MCF 10A (cell line): ENCODE measurements at regions of chr9 and their contacts with region 1.

Region 1: DNA sequence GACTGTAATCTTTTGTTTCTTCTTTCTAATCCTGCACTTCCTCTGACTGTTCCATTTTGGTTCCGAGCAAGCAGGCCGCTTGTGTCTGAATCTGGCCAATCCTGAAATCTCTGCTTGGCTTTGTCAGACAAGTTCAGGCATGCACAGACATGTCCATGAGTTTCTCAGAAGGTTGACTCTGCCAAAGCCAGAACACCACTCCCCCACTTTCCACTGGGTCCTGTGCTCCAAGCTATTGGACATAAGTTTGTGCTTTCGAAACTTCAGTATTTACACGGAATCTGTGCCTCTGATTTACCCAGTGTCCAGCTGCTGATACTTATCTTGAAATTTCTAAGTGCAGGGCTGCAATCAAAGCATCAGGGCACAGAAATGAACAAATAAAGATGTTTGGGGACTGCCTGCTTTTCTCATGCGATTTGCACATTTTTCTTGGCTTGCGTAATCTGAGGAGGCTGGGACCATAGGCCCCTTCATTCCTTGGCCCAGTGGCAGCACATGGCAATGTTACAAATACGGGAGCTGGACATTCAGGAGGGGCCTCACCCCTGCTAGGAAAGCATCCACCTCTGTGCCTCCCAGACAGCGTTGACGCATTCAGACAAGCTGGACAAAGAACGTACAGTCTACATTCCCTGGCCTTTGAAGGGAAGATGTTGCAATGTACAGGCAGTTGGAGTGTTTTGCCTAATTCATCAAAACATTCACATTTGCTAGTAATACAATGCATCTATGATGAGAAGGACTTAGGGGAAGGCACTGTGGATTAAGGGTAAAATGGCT is 209.2 kb upstream of the PAPPA start:
- DNase-seq: peak; percentile 99
- H3K4me3 Mint-ChIP-seq: peak overlapping the region; percentile 60
- H3K27ac Mint-ChIP-seq: peak overlapping the region; percentile 100
- H3K4me1 Mint-ChIP-seq: peaks cover 71% of the 10 kb centered on the region
- H3K27me3 Mint-ChIP-seq: no peaks in the 10 kb centered on the region
- CTCF ChIP-seq: no peak

Region 2: DNA sequence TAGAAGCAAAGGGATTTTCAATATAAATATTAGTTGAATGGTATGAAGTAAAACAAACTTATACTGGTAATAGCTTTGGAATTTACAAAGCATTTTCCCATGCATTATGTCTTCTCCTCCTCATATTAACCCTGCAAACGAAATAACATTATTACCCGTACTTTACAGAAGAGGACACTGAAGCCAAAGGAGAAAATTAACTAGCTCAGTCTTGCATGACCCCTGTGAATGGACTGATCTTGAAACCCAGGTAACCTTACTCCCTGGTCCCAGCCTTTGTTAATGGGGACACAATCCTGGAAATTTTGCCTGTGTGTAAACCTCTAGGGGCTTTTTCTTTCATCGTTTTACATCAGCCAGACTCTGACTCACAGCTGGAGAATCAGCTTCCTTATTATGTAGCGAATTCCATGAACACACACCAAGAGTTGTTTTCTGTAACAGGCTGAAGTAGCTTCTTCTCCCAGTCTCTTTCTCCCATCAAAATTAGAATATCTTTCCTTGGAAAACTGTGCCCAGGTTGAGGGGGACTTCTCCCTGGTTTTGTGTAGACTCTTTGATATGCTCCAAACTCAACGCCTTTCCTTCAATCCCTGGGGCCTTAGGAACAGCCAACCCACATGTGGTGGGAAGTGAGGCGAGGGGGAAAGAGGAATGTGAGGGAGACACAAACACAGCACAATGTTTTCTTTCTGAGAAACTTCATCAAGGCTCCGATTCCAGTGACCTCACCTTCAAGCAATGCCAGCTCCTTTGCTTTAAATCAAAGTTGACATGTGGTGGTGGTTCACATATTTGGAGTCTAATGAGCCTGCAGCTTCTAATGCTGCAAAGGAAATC is 271.7 kb before region 1 on chr9:
- CTCF ChIA-PET with region 1: no interaction called
- POLR2A ChIA-PET with region 1: no interaction called
- intact Hi-C with region 1: loop called (anchors 2 kb)
- DNase-seq: peak; percentile 91
- H3K4me3 Mint-ChIP-seq: no peak overlapping the region
- H3K27ac Mint-ChIP-seq: peak overlapping the region; percentile 99
- H3K4me1 Mint-ChIP-seq: peaks cover 52% of the 10 kb centered on the region
- H3K27me3 Mint-ChIP-seq: no peaks in the 10 kb centered on the region
- CTCF ChIP-seq: no peak

Region 3: DNA sequence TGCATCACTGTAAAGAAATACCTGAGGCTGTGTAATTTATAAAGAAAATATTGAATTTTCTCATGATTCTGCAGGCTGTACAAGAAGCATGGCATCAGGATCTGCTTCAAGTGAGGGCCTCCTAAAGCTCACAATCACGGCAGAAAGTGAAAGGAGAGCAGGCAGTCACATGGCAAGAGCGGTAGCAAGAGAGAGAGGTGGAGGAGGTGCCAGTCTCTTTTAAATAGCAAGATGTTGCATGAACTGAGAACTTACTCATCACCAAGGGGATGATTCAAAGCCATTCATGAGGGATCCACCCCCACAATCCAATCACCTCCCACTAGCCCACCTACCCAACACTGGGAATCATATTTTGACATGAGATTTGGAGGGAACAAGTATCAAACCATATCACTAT is 24.7 kb after region 1 on chr9:
- CTCF ChIA-PET with region 1: interaction called, 3 read pairs
- POLR2A ChIA-PET with region 1: interaction called, 16 read pairs
- intact Hi-C with region 1: no loop called
- DNase-seq: peak; percentile 50
- H3K4me3 Mint-ChIP-seq: no peak overlapping the region
- H3K27ac Mint-ChIP-seq: no peak overlapping the region
- H3K4me1 Mint-ChIP-seq: peaks cover 23% of the 10 kb centered on the region
- H3K27me3 Mint-ChIP-seq: no peaks in the 10 kb centered on the region
- CTCF ChIP-seq: no peak

Region 4: DNA sequence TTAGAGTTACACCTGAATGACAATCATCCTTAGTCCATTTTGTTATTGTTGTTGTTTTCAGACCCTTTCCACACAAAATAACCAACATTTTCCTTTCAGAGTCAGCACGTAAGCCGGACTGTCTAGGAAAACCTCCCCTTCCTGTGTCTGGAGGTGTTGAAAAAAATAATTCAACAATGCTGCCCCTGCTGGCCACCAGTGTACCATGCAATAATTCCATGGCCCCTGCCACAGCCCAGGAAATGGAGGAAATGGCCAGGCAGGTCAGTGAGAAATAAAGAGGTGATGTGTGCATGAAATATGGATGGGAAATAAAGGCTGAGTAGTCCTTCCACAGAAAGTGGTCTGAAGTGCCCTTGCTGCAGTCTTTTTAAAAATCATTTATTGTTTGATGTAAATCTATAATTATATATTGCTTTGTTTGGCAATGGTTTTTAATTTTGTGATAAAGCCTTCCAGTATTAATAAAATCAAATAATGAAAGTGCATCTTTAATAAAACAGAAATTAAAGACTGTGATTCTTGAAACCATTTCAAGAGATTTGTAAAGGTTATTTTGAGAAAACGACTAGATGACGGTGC is 56.5 kb after region 1 on chr9:
- CTCF ChIA-PET with region 1: interaction called, 6 read pairs
- POLR2A ChIA-PET with region 1: interaction called, 25 read pairs
- intact Hi-C with region 1: loop called (anchors 1 kb)
- DNase-seq: peak; percentile 45
- H3K4me3 Mint-ChIP-seq: no peak overlapping the region
- H3K27ac Mint-ChIP-seq: no peak overlapping the region
- H3K4me1 Mint-ChIP-seq: peaks cover 44% of the 10 kb centered on the region
- H3K27me3 Mint-ChIP-seq: no peaks in the 10 kb centered on the region
- CTCF ChIP-seq: peak; percentile 37

Region 5: DNA sequence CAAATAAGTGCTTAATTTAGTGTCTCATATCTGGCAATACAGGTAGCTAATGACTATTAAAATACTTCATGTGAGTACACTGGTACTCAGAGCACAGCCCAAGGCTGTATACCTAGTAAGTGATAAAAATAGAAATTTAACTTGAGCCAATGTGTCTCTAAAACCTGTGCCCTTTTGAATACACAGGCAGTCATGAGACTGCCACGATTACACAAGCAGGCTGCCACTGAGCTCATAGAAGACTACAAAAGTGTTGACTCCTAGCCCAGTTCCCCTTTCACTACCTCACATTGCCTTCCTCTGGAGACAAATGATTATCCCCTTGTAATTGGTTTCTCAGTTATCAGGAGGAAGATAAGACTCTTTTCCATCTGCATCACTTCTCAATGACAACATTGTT is 142.9 kb after region 1 on chr9:
- CTCF ChIA-PET with region 1: interaction called, 4 read pairs
- POLR2A ChIA-PET with region 1: interaction called, 20 read pairs
- intact Hi-C with region 1: no loop called
- DNase-seq: peak; percentile 81
- H3K4me3 Mint-ChIP-seq: peak overlapping the region; percentile 22
- H3K27ac Mint-ChIP-seq: peak overlapping the region; percentile 68
- H3K4me1 Mint-ChIP-seq: peaks cover 16% of the 10 kb centered on the region
- H3K27me3 Mint-ChIP-seq: no peaks in the 10 kb centered on the region
- CTCF ChIP-seq: no peak

Region 6: DNA sequence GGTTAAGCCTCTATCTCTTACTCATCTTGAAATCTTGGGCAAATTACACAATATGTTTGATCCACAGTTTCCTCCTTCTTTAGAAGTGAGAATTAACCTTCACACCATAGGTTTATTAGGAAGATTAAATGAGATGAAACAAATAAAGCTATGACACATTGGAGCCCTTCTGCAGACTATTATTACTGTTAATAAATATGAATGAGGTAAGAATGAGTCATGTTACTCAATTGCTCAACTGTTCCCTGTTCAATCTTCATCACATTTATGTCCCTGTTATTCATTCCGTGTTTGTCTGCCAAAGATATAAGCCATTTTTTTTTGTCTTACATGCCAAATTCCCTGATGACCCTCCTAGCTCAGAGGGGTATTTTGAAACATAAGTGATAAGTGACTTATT is 157.2 kb after region 1 on chr9:
- CTCF ChIA-PET with region 1: interaction called, 3 read pairs
- POLR2A ChIA-PET with region 1: interaction called, 6 read pairs
- intact Hi-C with region 1: loop called (anchors 1 kb)
- DNase-seq: peak; percentile 77
- H3K4me3 Mint-ChIP-seq: no peak overlapping the region
- H3K27ac Mint-ChIP-seq: peak overlapping the region; percentile 52
- H3K4me1 Mint-ChIP-seq: peaks cover 48% of the 10 kb centered on the region
- H3K27me3 Mint-ChIP-seq: no peaks in the 10 kb centered on the region
- CTCF ChIP-seq: no peak

Region 7: GRCh38 chr9:116149844-116150243 is 205.5 kb after region 1 on chr9:
- CTCF ChIA-PET with region 1: interaction called, 4 read pairs
- POLR2A ChIA-PET with region 1: interaction called, 4 read pairs
- intact Hi-C with region 1: loop called (anchors 5 kb)
- DNase-seq: peak; percentile 51
- H3K4me3 Mint-ChIP-seq: no peak overlapping the region
- H3K27ac Mint-ChIP-seq: no peak overlapping the region
- H3K4me1 Mint-ChIP-seq: peaks cover 24% of the 10 kb centered on the region
- H3K27me3 Mint-ChIP-seq: no peaks in the 10 kb centered on the region
- CTCF ChIP-seq: peak; percentile 47